Naive thymus-derived CD4-positive, alpha-beta T cell (primary cell): ENCODE measurements at regions of chr1 and their contacts with region 1.

Region 1: GRCh38 chr1:12153181-12153785 is 13.5 kb upstream of the TNFRSF1B start:
- DNase-seq: no peak
- ATAC-seq: peak; percentile 79
- H3K4me3 ChIP-seq: no peak overlapping the region
- H3K4me3 Mint-ChIP-seq: peak overlapping the region in 9 of 10 donors; percentile 20 to 73 (median 34)
- H3K27ac ChIP-seq: peak overlapping the region; percentile 74
- H3K27ac Mint-ChIP-seq: peak overlapping the region; percentile 24 to 96 (median 79)
- H3K4me1 ChIP-seq: peaks cover 68 to 72% of the 10 kb centered on the region in 2 donors
- H3K4me1 Mint-ChIP-seq: peaks cover 70 to 89% (median 84%) of the 10 kb centered on the region in 7 donors
- H3K27me3 ChIP-seq: no peaks in the 10 kb centered on the region
- H3K27me3 Mint-ChIP-seq: no peaks in the 10 kb centered on the region

Region 2: DNA sequence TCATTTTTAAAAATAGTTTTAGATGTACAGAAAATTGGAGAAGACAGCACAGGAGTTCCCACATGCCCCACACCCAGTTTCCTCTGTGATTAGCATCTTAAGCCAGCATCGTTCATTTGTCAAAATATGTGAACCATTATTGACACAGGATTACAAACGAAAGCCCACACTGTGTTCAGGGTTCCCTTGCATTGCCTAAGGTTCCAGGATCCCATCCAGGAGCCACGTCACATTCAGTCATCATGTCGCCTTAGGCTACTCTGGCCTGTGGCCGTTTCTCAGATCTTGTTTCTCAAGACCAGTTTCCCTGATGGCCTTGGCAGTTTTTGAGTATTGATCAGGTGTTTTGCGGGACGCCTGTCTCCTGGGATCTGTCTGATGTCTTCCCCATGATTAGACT is 21.2 kb before region 1 on chr1:
- CTCF ChIA-PET with region 1: interaction called, 45 read pairs
- POLR2A ChIA-PET with region 1: interaction called, 57 read pairs
- intact Hi-C with region 1: loop called in 1 of 2 experiments (anchors 2 kb)
- DNase-seq: no peak
- ATAC-seq: no peak
- H3K4me3 ChIP-seq: no peak overlapping the region
- H3K4me3 Mint-ChIP-seq: peak overlapping the region in 8 of 10 donors; percentile 17 to 88 (median 41)
- H3K27ac ChIP-seq: peak overlapping the region; percentile 61
- H3K27ac Mint-ChIP-seq: peak overlapping the region; percentile 91 to 97 (median 94)
- H3K4me1 ChIP-seq: peaks cover 20 to 33% of the 10 kb centered on the region in 2 donors
- H3K4me1 Mint-ChIP-seq: peaks cover 15 to 42% (median 36%) of the 10 kb centered on the region in 7 donors
- H3K27me3 ChIP-seq: no peaks in the 10 kb centered on the region
- H3K27me3 Mint-ChIP-seq: no peaks in the 10 kb centered on the region

Region 3: DNA sequence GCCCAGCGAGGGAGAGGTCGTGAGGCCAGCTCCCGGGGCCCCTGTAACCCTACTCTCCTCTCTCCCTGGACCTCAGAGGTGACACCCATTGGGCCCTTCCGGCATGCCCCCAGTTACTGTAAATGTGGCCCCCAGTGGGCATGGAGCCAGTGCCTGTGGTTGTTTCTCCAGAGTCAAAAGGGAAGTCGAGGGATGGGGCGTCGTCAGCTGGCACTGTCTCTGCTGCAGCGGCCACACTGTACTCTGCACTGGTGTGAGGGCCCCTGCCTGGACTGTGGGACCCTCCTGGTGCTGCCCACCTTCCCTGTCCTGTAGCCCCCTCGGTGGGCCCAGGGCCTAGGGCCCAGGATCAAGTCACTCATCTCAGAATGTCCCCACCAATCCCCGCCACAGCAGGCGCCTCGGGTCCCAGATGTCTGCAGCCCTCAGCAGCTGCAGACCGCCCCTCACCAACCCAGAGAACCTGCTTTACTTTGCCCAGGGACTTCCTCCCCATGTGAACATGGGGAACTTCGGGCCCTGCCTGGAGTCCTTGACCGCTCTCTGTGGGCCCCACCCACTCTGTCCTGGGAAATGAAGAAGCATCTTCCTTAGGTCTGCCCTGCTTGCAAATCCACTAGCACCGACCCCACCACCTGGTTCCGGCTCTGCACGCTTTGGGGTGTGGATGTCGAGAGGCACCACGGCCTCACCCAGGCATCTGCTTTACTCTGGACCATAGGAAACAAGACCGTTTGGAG is 10.2 kb before region 1 on chr1:
- CTCF ChIA-PET with region 1: interaction called, 3 read pairs
- POLR2A ChIA-PET with region 1: interaction called, 57 read pairs
- intact Hi-C with region 1: no loop called
- DNase-seq: no peak
- ATAC-seq: peak; percentile 66
- H3K4me3 ChIP-seq: no peak overlapping the region
- H3K4me3 Mint-ChIP-seq: peak overlapping the region in 8 of 10 donors; percentile 1 to 69 (median 52)
- H3K27ac ChIP-seq: no peak overlapping the region
- H3K27ac Mint-ChIP-seq: peak overlapping the region; percentile 76 to 94 (median 92)
- H3K4me1 ChIP-seq: peaks cover 24 to 37% of the 10 kb centered on the region in 2 donors
- H3K4me1 Mint-ChIP-seq: peaks cover 37 to 54% (median 46%) of the 10 kb centered on the region in 7 donors
- H3K27me3 ChIP-seq: no peaks in the 10 kb centered on the region
- H3K27me3 Mint-ChIP-seq: no peaks in the 10 kb centered on the region

Region 4: GRCh38 chr1:12166834-12167492 is 13.7 kb after region 1 on chr1 and contains the start of gene TNFRSF1B:
- CTCF ChIA-PET with region 1: interaction called, 4 read pairs
- POLR2A ChIA-PET with region 1: interaction called, 76 read pairs
- intact Hi-C with region 1: loop called (anchors 1 to 2 kb)
- DNase-seq: peak; percentile 42 to 84 (median 51)
- ATAC-seq: peak; percentile 82
- H3K4me3 ChIP-seq: peak within 1 kb of the TSS; percentile 84
- H3K4me3 Mint-ChIP-seq: peak within 1 kb of the TSS; percentile 94 to 100 (median 98)
- H3K27ac ChIP-seq: peak within 1 kb of the TSS; percentile 91
- H3K27ac Mint-ChIP-seq: peak within 1 kb of the TSS; percentile 94 to 100 (median 98)
- H3K4me1 ChIP-seq: peaks cover 19 to 59% of the 10 kb centered on the region in 2 donors
- H3K4me1 Mint-ChIP-seq: peaks cover 42 to 83% (median 60%) of the 10 kb centered on the region in 7 donors
- H3K27me3 ChIP-seq: no peaks in the 10 kb centered on the region
- H3K27me3 Mint-ChIP-seq: no peaks in the 10 kb centered on the region
- total RNA-seq, gene TNFRSF1B: 38.6 to 278 (median 60.3) TPM

Region 5: DNA sequence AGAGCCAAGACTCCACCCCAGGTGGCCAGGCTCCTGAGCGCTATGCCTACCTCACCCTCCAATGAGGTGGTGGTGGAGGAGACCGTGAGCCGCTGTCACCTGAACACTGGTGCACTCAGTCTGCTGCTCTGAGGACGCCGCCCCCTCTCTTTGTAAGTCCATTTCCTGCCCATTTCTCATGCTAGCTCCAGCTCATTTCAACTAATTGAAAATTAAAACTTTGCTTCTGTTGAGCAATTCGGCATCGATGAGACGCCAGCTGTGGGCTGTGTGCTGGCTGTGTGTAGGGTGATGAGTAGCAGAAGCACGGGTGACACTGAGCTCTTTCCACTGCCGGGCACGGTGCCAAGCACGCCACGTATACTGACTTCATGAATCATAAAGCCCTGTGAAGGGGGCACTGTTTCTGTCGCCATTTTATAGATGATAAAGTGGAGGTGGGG is 24.7 kb after region 1 on chr1:
- CTCF ChIA-PET with region 1: interaction called, 5 read pairs
- POLR2A ChIA-PET with region 1: interaction called, 125 read pairs
- intact Hi-C with region 1: loop called in 1 of 2 experiments (anchors 1 kb)
- DNase-seq: peak; percentile 75 to 96 (median 85)
- ATAC-seq: peak; percentile 74
- H3K4me3 ChIP-seq: peak overlapping the region; percentile 38
- H3K4me3 Mint-ChIP-seq: peak overlapping the region; percentile 81 to 92 (median 86)
- H3K27ac ChIP-seq: peak overlapping the region; percentile 82
- H3K27ac Mint-ChIP-seq: peak overlapping the region; percentile 89 to 100 (median 97)
- H3K4me1 ChIP-seq: peaks cover 66 to 80% of the 10 kb centered on the region in 2 donors
- H3K4me1 Mint-ChIP-seq: peaks cover 51 to 91% (median 80%) of the 10 kb centered on the region in 7 donors
- H3K27me3 ChIP-seq: no peaks in the 10 kb centered on the region
- H3K27me3 Mint-ChIP-seq: no peaks in the 10 kb centered on the region

Region 6: GRCh38 chr1:12208764-12209494 is 55.6 kb after region 1 on chr1:
- CTCF ChIA-PET with region 1: interaction called, 14 read pairs
- POLR2A ChIA-PET with region 1: interaction called, 12 read pairs
- intact Hi-C with region 1: no loop called
- DNase-seq: peak; percentile 64 to 92 (median 79)
- ATAC-seq: peak; percentile 89
- H3K4me3 ChIP-seq: no peak overlapping the region
- H3K4me3 Mint-ChIP-seq: peak overlapping the region in 6 of 10 donors; percentile 23 to 47 (median 34)
- H3K27ac ChIP-seq: peak overlapping the region; percentile 25
- H3K27ac Mint-ChIP-seq: peak overlapping the region; percentile 18 to 90 (median 76)
- H3K4me1 ChIP-seq: peaks cover 32 to 39% of the 10 kb centered on the region in 2 donors
- H3K4me1 Mint-ChIP-seq: peaks cover 32 to 56% (median 51%) of the 10 kb centered on the region in 7 donors
- H3K27me3 ChIP-seq: no peaks in the 10 kb centered on the region
- H3K27me3 Mint-ChIP-seq: no peaks in the 10 kb centered on the region

Region 7: DNA sequence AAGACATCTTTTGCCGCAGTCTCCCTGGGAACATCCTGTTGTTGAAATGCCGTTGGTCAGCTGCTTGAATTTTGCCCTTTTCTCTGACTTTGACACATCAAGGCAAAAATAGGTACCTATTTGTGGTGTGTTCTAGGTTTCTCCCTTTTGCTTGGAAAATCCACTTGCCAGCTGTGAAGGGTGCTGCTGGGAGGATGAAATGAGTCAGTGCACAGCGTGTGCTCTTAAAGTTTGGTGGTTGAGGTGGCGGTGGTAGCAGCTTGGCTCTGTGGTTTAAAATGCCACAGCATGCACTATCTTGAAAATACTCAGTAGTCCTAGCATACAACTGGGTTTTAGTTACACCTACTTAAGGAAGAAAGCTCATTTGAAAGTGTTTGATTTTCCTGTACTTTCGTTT is 280.9 kb after region 1 on chr1:
- CTCF ChIA-PET with region 1: no interaction called
- POLR2A ChIA-PET with region 1: no interaction called
- intact Hi-C with region 1: loop called in 1 of 2 experiments (anchors 10 kb)
- DNase-seq: peak in 6 of 9 donors; percentile 32 to 70 (median 46)
- ATAC-seq: peak; percentile 79
- H3K4me3 ChIP-seq: peak overlapping the region; percentile 44
- H3K4me3 Mint-ChIP-seq: peak overlapping the region; percentile 54 to 76 (median 70)
- H3K27ac ChIP-seq: peak overlapping the region; percentile 58
- H3K27ac Mint-ChIP-seq: peak overlapping the region; percentile 69 to 92 (median 84)
- H3K4me1 ChIP-seq: peaks cover 52 to 56% of the 10 kb centered on the region in 2 donors
- H3K4me1 Mint-ChIP-seq: peaks cover 46 to 85% (median 71%) of the 10 kb centered on the region in 7 donors
- H3K27me3 ChIP-seq: no peaks in the 10 kb centered on the region
- H3K27me3 Mint-ChIP-seq: no peaks in the 10 kb centered on the region